WTC11 (cell line): ENCODE measurements at regions of chr1 and their contacts with region 1.

Region 1: DNA sequence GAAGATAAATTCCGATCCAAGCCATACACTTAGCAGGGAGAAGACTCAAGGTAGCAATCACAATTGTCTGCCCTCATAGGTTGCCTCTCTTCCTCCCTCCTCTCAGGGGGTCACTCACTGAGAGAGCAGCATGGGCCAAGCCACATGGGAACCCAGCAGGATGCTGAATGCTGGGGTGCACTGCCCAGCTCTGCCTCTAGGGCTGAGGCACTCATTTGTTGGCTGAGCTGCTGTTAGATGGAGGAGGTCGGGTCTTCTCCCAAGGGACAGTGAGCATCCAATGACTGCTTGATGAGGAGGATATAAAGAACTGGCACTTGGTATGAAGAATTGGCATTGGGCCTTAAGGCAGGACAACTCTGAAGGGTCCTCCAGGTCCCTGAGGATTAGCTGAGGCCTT is 418.8 kb downstream of the SIPA1L2 start:
- DNase-seq: peak; percentile 69
- ATAC-seq: peak; percentile 100
- H3K4me3 Mint-ChIP-seq: no peak overlapping the region
- H3K27ac Mint-ChIP-seq: no peak overlapping the region
- H3K4me1 Mint-ChIP-seq: peaks cover 18% of the 10 kb centered on the region
- H3K27me3 Mint-ChIP-seq: peaks cover 31% of the 10 kb centered on the region
- CTCF ChIP-seq: peak; percentile 59

Region 2: DNA sequence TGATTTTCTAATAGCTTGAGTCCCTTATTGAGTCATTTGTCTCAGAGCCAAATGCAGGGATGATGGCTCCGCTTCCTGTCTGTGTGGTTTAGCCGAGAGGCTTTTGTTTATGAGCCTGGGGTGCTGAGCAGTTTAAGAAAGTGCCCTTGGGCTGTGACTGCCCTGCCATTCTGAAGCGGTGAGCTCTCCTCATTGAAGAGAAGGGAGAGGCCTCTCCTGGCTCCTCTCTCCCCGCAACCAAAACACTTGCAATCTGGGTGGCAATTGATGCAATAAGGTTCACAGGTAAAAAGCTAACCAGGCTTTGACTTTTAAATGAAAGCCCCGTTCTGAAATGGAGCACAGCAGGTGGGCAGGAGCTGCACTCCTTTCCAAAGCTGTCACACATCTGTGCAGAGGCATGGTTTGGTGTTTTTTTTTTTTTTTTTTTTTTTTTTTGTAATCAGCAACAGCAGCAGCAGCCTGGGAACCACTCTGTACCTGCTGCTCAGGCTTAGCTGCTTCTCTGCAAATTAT is 15.1 kb after region 1 on chr1:
- CTCF ChIA-PET with region 1: interaction called, 15 read pairs
- POLR2A ChIA-PET with region 1: no interaction called
- DNase-seq: peak; percentile 57
- ATAC-seq: peak; percentile 94
- H3K4me3 Mint-ChIP-seq: peak overlapping the region; percentile 50
- H3K27ac Mint-ChIP-seq: peak overlapping the region; percentile 46
- H3K4me1 Mint-ChIP-seq: peaks cover 53% of the 10 kb centered on the region
- H3K27me3 Mint-ChIP-seq: peaks cover 64% of the 10 kb centered on the region
- CTCF ChIP-seq: no peak